Activated CD4-positive, alpha-beta T cell treated with anti-CD3 and anti-CD28 coated beads, Interleukin-2, amount 10 ng/mL, durations not matched to agents 24 days and 14 days (primary cell): ENCODE measurements at regions of chr4 and their contacts with region 1.

Region 1: DNA sequence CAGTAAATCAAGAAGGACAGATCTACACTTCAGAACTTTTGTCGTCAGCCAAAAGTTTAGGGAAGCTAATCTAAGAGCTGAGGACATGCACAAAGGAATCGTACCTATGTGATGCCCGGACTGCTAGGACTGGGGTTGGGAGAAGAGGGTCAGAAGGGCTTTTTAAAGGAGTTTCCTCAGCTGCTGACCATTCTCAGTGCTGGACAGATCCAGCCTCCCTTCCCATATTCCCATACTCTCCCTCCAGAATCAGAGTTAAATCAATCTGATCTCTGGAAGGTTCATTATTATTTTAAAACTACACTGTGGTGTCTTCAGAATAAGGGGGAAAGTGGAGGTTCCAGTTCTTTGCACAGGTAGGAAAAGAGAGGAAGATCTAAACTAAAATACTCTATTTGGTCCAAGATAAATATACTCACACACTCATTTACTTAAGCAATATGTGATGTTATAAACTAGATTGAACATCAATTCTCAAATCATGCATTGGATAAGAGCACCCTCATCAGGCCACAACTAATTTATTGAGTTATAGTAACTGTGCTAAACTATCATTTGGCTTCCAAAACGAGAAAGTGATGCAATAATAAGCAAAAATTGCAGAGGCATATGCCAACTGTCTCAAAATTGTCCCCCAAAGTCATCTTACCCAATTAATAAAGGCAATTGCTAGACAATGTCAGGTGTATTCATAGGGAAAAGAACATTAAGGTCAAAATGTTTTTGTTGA is 124.7 kb downstream of the HNRNPD start:
- DNase-seq: no peak
- H3K4me3 Mint-ChIP-seq: no peak overlapping the region
- H3K27ac Mint-ChIP-seq: no peak overlapping the region
- H3K4me1 Mint-ChIP-seq: no peaks in the 10 kb centered on the region
- H3K27me3 Mint-ChIP-seq: no peaks in the 10 kb centered on the region

Region 2: GRCh38 chr4:82108506-82108905 is 140.6 kb before region 1 on chr4:
- intact Hi-C with region 1: loop called (anchors 5 kb)
- DNase-seq: no peak
- H3K4me3 Mint-ChIP-seq: no peak overlapping the region
- H3K27ac Mint-ChIP-seq: no peak overlapping the region
- H3K4me1 Mint-ChIP-seq: no peaks in the 10 kb centered on the region
- H3K27me3 Mint-ChIP-seq: no peaks in the 10 kb centered on the region

Region 3: DNA sequence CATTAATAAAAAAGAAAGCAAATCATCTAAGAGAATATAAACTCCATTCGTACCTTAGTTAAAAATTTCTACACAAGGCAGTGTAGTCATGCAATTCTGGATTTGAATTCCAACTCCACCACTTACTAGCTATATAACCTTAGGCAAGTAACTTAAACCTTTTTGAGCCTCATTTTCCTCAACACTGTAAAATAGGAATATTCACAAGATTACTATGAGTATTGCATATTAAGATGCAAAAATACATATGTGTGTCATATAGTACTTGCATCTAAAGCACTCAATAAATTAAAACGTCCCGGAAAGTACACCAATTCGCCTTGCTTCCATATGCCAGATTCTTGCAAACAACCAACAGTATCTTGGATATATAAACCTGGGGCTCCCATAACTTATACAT is 82.7 kb after region 1 on chr4:
- intact Hi-C with region 1: no loop called
- DNase-seq: no peak
- H3K4me3 Mint-ChIP-seq: no peak overlapping the region
- H3K27ac Mint-ChIP-seq: no peak overlapping the region
- H3K4me1 Mint-ChIP-seq: no peaks in the 10 kb centered on the region
- H3K27me3 Mint-ChIP-seq: peaks cover 3% of the 10 kb centered on the region